ENCODE measurements at regions of chr7 and their contacts with region 1.

Region 1: DNA sequence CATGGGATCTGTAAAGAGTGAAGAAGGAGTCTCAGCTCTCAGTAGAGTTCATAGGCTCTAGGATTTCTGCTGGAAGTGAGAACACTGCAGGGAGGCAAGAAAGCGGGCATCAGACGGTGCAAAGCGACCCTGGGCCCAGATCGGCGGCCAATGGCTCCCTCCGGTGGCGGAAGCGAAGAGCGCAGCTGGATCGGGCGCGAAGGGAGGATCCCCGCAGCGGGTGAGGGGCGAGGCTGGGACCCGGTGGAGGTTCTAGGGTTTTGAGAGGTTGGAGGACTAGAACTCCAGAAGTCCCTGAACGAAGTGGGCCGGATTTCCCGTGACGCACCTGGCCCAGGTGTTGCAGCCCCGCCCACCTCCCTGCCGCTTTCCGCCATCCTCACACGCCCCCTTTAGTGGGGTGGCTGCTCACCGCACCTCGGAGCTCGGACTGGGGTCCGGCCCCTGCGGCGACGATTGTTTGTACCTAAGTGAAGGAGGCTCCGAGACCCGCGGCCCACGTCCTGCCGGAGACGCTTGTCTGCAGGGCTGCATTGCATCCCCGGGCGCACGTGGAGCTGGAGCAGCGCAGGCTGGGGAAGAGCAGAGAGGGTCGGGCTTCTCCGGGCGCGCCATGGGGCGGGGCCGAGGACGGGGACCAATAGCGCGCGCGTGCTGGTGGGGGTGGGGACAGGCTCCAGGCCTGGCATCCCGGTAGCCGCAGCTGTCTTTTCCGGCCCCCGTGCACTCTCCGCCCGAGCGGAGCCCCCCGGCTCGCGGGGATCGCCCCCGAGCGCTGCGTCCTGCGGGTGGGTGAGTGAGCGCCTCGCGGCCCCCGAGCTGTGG is at the start of gene SLC12A9:
- DNase-seq: peak; percentile 92 to 96 (median 94)
- ATAC-seq: peak; percentile 99 to 100 (median 100)
- H3K4me3 ChIP-seq: peak within 1 kb of the TSS; percentile 32 to 96 (median 68)
- H3K27ac ChIP-seq: peak within 1 kb of the TSS in 11 of 12 donors; percentile 26 to 86 (median 67)
- H3K4me1 ChIP-seq: peaks cover 0 to 21% (median 12%) of the 10 kb centered on the region in 12 donors
- H3K27me3 ChIP-seq: no peaks in the 10 kb centered on the region
- CTCF ChIP-seq: peak; percentile 85 to 98 (median 94)
- POLR2A ChIP-seq: peak in 1 of 2 donors; percentile 63
- total RNA-seq, gene SLC12A9: 4.6 to 23.6 (median 7.0) TPM

Region 2: DNA sequence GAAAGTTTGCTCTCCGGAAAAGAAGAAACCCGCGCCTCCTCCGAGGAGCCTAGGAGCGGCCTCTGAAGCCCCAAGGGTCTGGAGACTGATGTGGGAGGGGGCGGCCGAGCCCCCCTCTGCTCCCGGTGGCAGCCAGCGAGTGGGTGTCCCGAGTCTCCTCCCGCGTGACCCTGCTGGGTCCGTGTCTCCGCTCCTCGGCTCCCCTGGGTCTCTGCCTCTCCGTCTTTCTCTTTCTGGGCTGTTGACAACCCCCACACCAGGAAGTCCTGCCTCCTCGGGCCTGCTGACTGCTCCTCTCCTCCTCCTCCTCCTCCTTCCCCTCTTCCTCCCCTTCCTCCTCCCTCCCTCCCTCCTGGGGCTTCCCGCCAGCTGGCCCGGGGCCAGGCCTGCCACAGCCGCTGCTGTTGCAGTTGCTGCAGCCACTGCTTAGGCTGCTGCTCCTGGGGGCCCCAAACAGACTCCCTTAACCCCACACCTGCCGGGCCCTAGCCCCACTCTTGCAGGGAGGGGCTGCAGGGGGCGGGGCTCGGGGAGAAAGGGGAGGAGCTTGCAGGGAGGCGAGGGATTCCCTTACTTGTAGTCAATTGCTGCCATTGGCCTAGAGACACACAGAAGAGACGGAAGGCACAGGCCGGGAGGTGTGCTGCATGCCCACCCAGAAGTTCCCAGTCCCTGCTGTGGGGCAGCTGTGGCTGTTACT is 373.1 kb before region 1 on chr7 and contains the start of gene TSC22D4:
- intact Hi-C with region 1: loop called in 1 of 10 experiments (anchors 10 kb)
- DNase-seq: peak; percentile 95 to 98 (median 95)
- ATAC-seq: peak; percentile 82 to 92 (median 92)
- H3K4me3 ChIP-seq: peak within 1 kb of the TSS; percentile 66 to 100 (median 98)
- H3K27ac ChIP-seq: peak within 1 kb of the TSS; percentile 81 to 99 (median 96)
- H3K4me1 ChIP-seq: peaks cover 0 to 62% (median 42%) of the 10 kb centered on the region in 12 donors
- H3K27me3 ChIP-seq: no peaks in the 10 kb centered on the region
- CTCF ChIP-seq: peak in 1 of 12 donors; percentile 10
- POLR2A ChIP-seq: peak; percentile 57 to 88
- total RNA-seq, gene TSC22D4: 41.8 to 55.5 (median 49.0) TPM

Region 3: DNA sequence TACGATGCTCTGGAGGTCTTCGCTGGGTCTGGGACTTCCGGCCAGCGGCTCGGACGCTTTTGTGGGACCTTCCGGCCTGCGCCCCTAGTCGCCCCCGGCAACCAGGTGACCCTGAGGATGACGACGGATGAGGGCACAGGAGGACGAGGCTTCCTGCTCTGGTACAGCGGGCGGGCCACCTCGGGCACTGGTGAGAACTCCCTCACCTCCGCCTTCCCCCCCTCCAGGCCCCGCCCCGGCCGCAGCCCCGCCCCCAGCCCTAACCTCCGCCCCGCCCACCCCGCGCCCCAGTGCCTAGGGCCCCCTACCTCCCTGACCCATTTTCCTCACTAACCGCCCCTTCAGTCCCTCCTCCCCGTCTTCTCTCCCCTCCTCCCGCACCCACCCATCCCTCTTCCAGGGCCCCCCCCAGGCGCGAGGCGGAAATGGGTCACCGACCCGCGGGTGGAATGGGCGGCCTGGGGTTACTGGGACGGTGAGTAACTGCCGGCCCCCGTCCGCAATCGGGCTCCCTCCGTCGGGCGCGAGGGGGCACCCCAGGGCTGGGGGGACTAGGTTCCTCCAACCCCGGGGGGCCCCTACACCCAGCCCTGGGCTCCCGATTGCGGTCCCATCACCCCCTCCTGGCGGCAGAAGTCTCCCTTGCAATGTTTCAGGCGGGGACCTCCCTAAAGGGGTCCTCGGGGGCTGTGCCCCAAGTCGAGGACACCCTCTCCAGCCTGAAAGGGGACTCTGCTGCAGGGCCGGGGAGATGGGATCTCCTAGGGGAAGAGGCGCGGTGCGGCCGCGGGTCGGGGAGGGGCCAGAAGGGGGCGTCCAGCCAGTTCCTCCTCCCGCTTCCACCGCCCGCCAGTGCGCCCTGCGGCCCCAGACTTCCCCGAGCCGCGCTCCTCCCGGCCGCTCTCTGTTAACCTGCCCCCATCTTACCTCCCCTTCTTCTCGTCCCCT is 248.0 kb before region 1 on chr7:
- intact Hi-C with region 1: no loop called
- DNase-seq: peak; percentile 76 to 92 (median 83)
- ATAC-seq: peak; percentile 67 to 82 (median 74)
- H3K4me3 ChIP-seq: peak overlapping the region; percentile 48 to 96 (median 76)
- H3K27ac ChIP-seq: peak overlapping the region; percentile 2 to 90 (median 79)
- H3K4me1 ChIP-seq: peaks cover 0 to 34% (median 12%) of the 10 kb centered on the region in 12 donors
- H3K27me3 ChIP-seq: no peaks in the 10 kb centered on the region
- CTCF ChIP-seq: peak; percentile 24 to 64 (median 52)
- POLR2A ChIP-seq: peak in 1 of 2 donors; percentile 64

Region 4: DNA sequence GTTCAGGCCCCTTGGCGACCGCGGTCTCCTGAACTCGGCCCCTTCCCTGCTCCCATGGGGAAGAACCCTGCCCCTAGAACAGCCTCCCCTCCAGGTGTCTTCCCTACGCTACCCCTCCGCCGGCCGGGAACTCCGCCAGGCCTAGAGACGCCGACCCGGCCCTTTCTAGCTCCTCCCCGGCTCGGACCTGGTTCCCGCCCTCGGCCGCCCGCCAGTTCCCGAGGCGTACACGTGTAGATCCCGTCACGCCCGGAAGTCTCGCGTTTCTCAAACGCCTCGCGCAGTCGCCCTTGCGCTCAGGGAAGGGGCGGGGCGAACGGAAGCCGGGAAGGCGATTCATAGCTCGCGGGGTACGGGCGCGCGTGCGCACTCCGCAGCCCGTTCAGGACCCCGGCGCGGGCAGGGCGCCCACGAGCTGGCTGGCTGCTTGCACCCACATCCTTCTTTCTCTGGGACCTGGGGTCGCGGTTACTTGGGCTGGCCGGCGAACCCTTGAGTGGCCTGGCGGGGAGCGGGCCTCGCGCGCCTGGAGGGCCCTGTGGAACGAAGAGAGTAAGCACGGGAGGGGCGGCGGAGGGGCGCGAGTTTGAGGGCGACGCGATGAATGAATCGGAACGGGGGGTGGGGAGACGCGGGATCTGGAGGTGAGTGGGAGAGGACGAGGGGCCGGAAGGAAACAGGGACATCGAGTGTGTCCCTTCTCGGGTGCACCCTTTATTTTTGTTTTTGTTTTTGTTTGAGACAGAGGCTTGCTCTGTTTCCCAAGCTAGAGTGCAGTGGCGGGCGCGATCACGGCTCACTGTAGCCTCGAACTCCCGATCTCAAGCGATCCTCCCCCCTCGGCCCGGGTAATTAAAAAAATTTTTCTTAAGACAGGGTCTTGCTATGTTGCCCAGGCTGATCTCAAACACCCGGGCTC is 146.2 kb before region 1 on chr7 and contains the start of gene POP7:
- intact Hi-C with region 1: loop called in 9 of 10 experiments (anchors 1 to 10 kb)
- DNase-seq: peak; percentile 99 to 100 (median 99)
- ATAC-seq: peak; percentile 96 to 99 (median 98)
- H3K4me3 ChIP-seq: peak within 1 kb of the TSS; percentile 53 to 88 (median 77)
- H3K27ac ChIP-seq: peak within 1 kb of the TSS; percentile 91 to 99 (median 94)
- H3K4me1 ChIP-seq: peaks cover 0 to 28% (median 18%) of the 10 kb centered on the region in 12 donors
- H3K27me3 ChIP-seq: no peaks in the 10 kb centered on the region
- CTCF ChIP-seq: no peak
- POLR2A ChIP-seq: peak in 1 of 2 donors; percentile 71
- total RNA-seq, gene POP7: 24.1 to 41.3 (median 28.9) TPM

Region 5: DNA sequence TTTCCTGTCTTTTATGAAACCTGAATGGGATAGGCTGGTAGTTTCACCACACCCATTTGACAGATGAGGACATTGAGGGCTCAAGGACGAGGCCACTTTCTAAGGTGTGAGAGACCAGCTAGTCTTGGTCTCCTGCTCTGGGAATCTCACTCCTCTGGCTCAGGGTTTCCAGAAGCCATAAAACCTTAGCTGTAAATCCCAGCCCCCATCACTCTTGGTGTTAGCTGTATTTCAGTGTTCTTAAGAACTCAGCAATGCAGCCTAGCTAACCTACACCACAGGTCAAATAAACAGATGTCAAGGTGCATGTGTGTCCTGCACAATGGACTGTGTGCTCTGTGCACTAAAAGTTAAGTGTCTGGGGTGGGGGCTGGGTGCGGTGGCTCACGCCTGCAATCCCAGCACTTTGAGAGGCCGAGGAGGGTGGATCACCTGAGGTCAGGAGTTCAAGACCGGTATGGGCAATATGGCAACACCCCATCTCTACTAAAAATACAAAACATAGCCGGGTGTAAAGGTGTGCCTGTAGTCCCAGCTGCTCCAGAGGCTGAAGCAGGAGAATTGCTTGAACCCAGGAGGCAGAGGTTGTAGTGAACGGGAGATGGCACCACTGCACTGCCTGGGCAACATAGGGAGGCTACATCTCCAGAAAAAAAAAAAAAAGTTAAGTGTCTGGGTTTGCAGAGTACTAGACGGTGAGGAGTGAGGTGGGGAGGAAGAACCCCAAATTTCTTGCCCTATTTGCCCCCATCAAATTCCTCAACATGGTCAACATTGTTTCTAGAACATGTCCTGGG is 132.5 kb before region 1 on chr7:
- intact Hi-C with region 1: loop called in 1 of 10 experiments (anchors 5 kb)
- DNase-seq: peak in 1 of 5 donors; percentile 4
- ATAC-seq: no peak
- H3K4me3 ChIP-seq: no peak overlapping the region
- H3K27ac ChIP-seq: no peak overlapping the region
- H3K4me1 ChIP-seq: peaks cover 0 to 11% (median 0%) of the 10 kb centered on the region in 12 donors
- H3K27me3 ChIP-seq: peaks cover 11 to 50% (median 34%) of the 10 kb centered on the region in 9 donors
- CTCF ChIP-seq: no peak
- POLR2A ChIP-seq: no peak

Region 6: GRCh38 chr7:100803398-100804233 is 48.6 kb before region 1 on chr7:
- intact Hi-C with region 1: loop called in 9 of 10 experiments (anchors 1 to 5 kb)
- DNase-seq: peak; percentile 70 to 90 (median 82)
- ATAC-seq: peak; percentile 77 to 92 (median 88)
- H3K4me3 ChIP-seq: peak overlapping the region in 6 of 12 donors; percentile 1 to 41 (median 6)
- H3K27ac ChIP-seq: peak overlapping the region; percentile 3 to 73 (median 44)
- H3K4me1 ChIP-seq: peaks cover 5 to 56% (median 25%) of the 10 kb centered on the region in 12 donors
- H3K27me3 ChIP-seq: no peaks in the 10 kb centered on the region
- CTCF ChIP-seq: no peak
- POLR2A ChIP-seq: no peak

Region 7: DNA sequence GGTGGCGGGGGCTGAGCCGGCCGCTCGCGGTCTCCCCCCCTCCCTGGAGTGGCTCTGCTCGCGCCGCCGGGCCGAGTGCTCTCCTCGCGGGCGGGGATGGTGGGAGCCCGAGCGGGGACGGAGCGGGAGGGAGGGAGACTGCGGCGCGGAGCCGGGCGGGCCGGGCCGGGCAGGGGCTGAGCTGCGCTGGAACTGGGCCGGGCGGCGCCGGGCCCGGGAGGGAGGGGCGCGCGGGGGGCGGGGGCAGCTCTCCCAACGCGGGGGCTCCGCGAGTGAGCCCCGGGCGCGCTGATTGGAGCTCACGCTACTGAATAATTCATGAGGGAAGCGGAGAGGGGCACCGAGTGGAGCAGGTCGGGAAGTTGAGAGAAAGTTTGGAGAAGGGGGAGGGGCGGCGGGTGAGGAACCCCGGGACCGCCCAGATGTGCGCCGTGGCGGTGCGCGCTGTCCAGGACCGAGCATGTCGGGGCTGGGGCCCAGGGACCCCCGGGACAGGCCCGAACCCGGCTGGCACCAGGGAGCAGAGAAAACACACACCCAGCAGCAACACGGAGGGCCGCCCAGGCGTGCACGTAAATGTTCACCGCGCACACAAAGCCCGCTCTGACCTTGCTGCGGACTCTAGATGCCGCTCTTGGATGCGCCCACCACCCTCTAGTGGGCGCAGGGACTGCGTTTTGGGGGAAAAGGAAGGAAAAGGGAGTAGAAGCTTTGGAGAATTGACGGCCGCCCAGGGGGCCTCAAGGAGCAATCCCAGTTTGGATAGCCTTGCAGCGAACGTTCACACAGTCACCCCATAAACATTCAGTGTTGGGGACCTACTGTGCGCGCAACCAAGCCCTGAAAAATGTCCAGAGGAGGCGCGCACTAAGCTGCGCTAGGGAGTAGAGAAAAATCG is 24.7 kb before region 1 on chr7 and contains the start of gene EPHB4:
- intact Hi-C with region 1: loop called in 2 of 10 experiments (anchors 1 to 2 kb)
- DNase-seq: peak; percentile 85 to 88 (median 88)
- ATAC-seq: peak; percentile 52 to 80 (median 72)
- H3K4me3 ChIP-seq: peak within 1 kb of the TSS; percentile 61 to 86 (median 70)
- H3K27ac ChIP-seq: peak within 1 kb of the TSS; percentile 75 to 94 (median 86)
- H3K4me1 ChIP-seq: peaks cover 0 to 43% (median 13%) of the 10 kb centered on the region in 12 donors
- H3K27me3 ChIP-seq: peaks cover 0 to 28% (median 4%) of the 10 kb centered on the region in 9 donors
- CTCF ChIP-seq: peak in 7 of 12 donors; percentile 20 to 55 (median 34)
- POLR2A ChIP-seq: peak in 1 of 2 donors; percentile 45
- total RNA-seq, gene EPHB4: 18.0 to 76.2 (median 21.4) TPM

Measured in heart left ventricle (tissue), 16 donors.